ENCODE measurements at regions of chr2 and their contacts with region 1.

Region 1: GRCh38 chr2:215784371-215784783 is 229.0 kb downstream of the MREG start:
- DNase-seq: no peak
- H3K4me3 ChIP-seq: no peak overlapping the region
- H3K27ac ChIP-seq: no peak overlapping the region
- H3K4me1 ChIP-seq: no peaks in the 10 kb centered on the region
- H3K27me3 ChIP-seq: no peaks in the 10 kb centered on the region
- CTCF ChIP-seq: no peak
- POLR2A ChIP-seq: no peak

Region 2: GRCh38 chr2:215758691-215759090 is 25.7 kb before region 1 on chr2:
- CTCF ChIA-PET with region 1: no interaction called
- POLR2A ChIA-PET with region 1: no interaction called
- dilution Hi-C with region 1: no loop called
- intact Hi-C with region 1: loop called (anchors 2 kb)
- DNase-seq: peak; percentile 87
- H3K4me3 ChIP-seq: no peak overlapping the region
- H3K27ac ChIP-seq: peak overlapping the region; percentile 69
- H3K4me1 ChIP-seq: peaks cover 39% of the 10 kb centered on the region
- H3K27me3 ChIP-seq: no peaks in the 10 kb centered on the region
- CTCF ChIP-seq: no peak
- POLR2A ChIP-seq: no peak

Region 3: DNA sequence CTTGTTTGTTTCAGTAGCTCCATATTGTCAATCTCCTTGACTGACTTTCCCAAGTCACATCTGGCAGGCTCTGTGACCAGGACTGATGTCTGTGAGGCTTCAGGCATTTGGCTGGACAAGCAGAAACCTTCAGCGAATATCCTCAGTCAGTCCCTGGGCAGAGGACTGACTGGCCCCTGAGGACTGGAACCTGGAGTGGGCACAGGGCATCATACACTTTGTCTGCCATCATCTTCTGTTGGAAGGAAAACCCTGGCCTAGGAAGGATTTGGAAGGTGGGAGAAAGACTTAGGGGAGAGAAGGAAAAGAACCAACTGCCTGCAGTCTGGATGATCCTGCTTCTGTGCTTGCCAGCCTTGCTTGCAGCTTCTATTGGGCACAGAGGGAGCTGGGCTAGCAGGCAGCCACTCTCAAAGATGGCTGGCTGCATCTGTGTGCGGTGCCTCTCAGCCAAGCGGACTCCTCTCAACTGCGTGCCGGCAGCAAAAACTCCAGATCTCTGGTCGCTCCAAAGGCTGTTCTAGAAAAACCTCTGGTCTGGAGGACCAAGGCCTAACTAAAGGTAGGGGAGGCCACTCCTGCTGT is 461.1 kb after region 1 on chr2:
- CTCF ChIA-PET with region 1: no interaction called
- POLR2A ChIA-PET with region 1: no interaction called
- dilution Hi-C with region 1: no loop called
- intact Hi-C with region 1: no loop called
- DNase-seq: no peak
- H3K4me3 ChIP-seq: no peak overlapping the region
- H3K27ac ChIP-seq: no peak overlapping the region
- H3K4me1 ChIP-seq: no peaks in the 10 kb centered on the region
- H3K27me3 ChIP-seq: no peaks in the 10 kb centered on the region
- CTCF ChIP-seq: no peak
- POLR2A ChIP-seq: no peak

Measured in endothelial cell of umbilical vein (primary cell).